ENCODE measurements at regions of chr10 and their contacts with region 1.

Region 1: DNA sequence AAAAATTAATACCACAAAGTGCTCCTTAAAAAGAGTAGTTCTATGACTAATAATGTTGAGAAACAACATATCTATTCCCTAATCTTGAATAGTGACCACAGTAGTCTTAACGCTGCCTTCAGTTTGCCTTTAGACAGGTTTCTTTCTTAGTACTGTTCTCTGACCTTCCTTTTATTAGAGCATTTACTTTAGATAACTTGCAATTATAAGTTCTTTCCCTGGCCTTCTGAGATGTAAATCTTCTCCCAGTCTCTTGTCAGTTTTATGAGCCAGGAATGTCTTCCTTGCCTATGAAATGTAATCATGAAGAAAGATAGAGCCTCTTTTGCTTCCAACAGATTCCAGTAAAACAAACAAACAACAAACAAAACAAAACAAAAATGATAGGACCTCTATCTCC is 1119.8 kb upstream of the LRRTM3 start:
- DNase-seq: no peak

Region 2: DNA sequence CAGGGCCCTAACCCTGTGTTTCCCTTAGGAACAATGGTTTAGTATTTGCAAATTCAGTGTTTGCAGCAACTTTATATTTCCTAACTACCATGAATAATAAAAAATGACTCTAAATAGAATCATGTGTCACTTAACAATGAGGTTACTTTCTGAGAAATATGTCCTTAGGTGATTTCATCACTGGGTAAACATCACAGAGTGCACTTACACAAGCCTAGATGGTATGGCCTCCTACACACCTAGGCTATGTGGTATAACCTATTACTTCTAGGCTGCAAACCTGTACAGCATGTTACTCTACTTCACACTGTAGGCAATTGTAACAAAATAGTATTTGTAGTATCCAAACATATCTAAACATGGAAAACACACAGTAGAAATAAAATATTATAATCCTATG is 54.8 kb before region 1 on chr10:
- CTCF ChIA-PET with region 1: no interaction called
- POLR2A ChIA-PET with region 1: no interaction called
- DNase-seq: no peak

Region 3: DNA sequence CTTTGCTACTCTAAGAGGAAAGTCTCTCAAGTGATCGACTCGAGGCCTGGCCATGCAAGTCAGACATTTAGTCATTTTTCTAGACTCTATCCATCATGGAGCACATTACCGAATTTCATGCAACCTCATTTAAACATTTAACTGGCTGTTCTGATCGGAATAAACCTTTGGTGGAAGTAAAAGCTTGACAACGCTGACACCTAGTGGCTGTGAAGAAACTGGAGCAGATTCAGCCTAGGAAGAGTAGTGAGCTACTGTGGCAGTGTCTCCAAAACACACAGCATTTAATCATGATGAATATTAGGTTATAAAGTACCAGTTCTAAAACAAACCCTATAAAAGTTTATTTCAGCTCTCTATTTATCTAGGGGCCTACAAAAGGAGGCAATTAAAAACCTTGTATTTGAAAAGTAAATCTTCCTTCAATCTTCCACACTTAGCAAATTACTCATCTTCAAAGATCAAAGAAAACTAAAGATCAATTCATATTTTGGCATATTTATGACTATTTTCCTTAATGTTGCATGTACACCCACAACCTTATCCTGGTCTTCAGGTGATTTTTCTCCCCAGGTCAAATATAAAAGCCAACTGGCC is 1715.0 kb after region 1 on chr10:
- CTCF ChIA-PET with region 1: interaction called, 11 read pairs
- POLR2A ChIA-PET with region 1: no interaction called
- DNase-seq: peak; percentile 61